WTC11 (cell line): ENCODE measurements at regions of chr20 and their contacts with region 1.

Region 1: DNA sequence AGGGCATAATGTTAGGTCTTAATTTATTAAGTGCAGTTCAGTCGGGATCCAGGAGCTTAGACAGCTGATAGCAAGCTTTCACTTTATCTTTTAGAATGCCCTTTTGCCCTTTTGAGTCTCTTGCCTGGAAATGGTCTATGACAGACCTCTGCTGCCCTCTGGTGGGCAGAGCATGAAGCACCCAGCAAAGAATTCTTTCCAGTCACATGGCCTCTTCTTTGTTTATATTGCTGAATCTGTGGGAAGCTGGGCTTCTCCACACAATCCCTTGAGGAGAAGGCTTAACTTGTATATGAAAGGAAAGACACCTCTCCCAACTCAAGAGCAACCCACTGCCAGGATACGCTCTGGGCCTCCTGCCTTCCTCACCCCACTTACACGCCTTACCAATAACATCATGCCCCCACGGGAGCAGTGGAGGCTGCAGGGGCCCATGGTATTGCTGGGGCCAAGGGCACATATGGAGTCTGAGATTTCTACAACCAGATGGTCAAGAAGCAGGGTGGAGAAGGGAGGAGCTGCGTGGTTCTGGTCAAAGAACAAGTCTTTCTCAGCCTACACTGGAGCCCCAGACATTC is 20.4 kb downstream of the WFDC3 start:
- DNase-seq: peak; percentile 87
- ATAC-seq: peak; percentile 79
- H3K4me3 Mint-ChIP-seq: no peak overlapping the region
- H3K27ac Mint-ChIP-seq: peak overlapping the region; percentile 73
- H3K4me1 Mint-ChIP-seq: peaks cover 29% of the 10 kb centered on the region
- H3K27me3 Mint-ChIP-seq: no peaks in the 10 kb centered on the region
- CTCF ChIP-seq: peak; percentile 95

Region 2: DNA sequence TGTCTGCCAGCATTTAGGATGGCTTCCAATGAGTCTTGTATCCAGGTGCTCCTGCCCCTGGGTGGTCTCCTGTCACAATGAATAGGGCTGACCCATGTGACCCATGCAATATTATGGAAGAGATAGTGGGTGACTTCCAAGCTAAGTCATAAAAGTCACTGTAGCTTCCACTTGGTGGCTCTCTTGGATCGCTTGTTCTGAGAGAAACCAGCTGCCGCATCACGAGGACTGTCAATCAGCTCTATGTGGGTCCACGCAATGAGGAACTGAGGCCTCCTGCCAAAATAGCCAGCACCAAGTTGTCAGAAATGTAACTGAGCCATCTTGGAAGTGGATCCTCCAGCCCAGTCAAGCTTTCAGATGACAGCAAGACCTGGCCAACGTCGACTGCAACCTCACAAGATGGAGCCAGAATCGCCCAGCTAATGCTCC is 448.3 kb before region 1 on chr20:
- CTCF ChIA-PET with region 1: interaction called, 12 read pairs
- POLR2A ChIA-PET with region 1: no interaction called
- DNase-seq: no peak
- ATAC-seq: peak; percentile 49
- H3K4me3 Mint-ChIP-seq: no peak overlapping the region
- H3K27ac Mint-ChIP-seq: no peak overlapping the region
- H3K4me1 Mint-ChIP-seq: peaks cover 2% of the 10 kb centered on the region; the same call in 1 of the 2 replicates
- H3K27me3 Mint-ChIP-seq: no peaks in the 10 kb centered on the region
- CTCF ChIP-seq: no peak

Region 3: GRCh38 chr20:45436732-45437391 is 334.4 kb before region 1 on chr20:
- CTCF ChIA-PET with region 1: interaction called, 33 read pairs
- POLR2A ChIA-PET with region 1: no interaction called
- DNase-seq: peak; percentile 90
- ATAC-seq: peak; percentile 97
- H3K4me3 Mint-ChIP-seq: peak overlapping the region; percentile 82
- H3K27ac Mint-ChIP-seq: no peak overlapping the region
- H3K4me1 Mint-ChIP-seq: peaks cover 16% of the 10 kb centered on the region
- H3K27me3 Mint-ChIP-seq: peaks cover 5% of the 10 kb centered on the region; the same call in 1 of the 2 replicates
- CTCF ChIP-seq: peak; percentile 92

Region 4: DNA sequence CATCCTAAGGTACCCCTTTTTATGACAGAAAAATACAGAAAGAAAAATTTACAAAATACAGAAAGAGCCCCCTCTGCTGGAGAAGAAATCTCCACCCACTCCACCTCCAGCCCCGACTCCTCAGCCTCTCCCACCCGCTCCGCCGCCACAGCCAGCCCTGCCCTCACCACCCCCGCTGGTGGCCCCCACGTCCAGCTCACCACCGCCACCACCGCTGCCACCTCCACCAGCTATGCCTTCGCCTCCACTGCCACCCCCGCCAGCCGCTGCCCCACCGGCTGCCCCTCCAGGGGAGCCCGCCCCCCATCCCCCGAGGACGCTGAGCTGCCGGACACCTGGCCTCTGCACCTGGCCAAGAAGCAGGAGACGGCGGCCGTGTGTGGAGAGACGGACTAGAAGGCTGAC is 284.0 kb before region 1 on chr20:
- CTCF ChIA-PET with region 1: interaction called, 41 read pairs
- POLR2A ChIA-PET with region 1: no interaction called
- DNase-seq: peak; percentile 58
- ATAC-seq: peak; percentile 82
- H3K4me3 Mint-ChIP-seq: peak overlapping the region; percentile 63
- H3K27ac Mint-ChIP-seq: no peak overlapping the region
- H3K4me1 Mint-ChIP-seq: peaks cover 34% of the 10 kb centered on the region
- H3K27me3 Mint-ChIP-seq: no peaks in the 10 kb centered on the region
- CTCF ChIP-seq: peak; percentile 55

Region 5: DNA sequence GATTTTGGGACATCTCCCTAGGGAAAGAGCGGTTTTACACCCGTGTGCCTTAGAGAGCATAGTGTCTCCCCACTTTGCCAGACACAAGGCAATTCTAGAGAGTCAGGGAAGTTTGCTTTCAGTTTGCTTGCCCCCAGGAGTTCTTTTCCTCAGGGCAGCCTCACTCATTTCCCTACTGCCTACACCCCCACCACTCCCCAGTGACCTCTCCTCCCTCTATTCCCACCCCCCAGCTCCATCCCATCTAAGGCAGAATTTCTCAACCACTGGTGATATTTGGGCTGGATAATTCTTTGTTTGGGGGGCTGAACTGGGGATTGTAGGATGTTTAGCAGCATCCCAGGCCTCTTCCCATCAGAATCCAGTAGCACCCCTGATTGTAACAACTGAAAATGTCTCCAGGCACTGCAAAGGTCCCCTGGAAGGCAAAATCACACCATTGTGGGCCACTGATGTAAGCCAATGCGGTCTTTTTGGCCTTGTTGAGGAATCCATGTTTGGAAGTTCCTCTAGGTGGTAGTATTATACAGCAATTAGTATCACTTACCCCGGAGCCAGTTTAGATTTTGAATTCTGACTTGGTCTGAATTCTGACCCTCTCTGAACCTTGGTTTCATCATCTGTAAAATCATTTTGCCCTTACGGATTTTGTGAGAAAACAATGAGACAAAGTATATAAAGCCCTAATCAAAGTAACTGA is 225.4 kb before region 1 on chr20:
- CTCF ChIA-PET with region 1: interaction called, 79 read pairs
- POLR2A ChIA-PET with region 1: interaction called, 3 read pairs
- DNase-seq: peak; percentile 14
- ATAC-seq: peak; percentile 93
- H3K4me3 Mint-ChIP-seq: no peak overlapping the region
- H3K27ac Mint-ChIP-seq: 0 out of 2 replicates have a peak overlapping the region, but pooled peaks have one; percentile 9
- H3K4me1 Mint-ChIP-seq: peaks cover 13% of the 10 kb centered on the region
- H3K27me3 Mint-ChIP-seq: no peaks in the 10 kb centered on the region
- CTCF ChIP-seq: no peak; the same call in 1 of the 2 replicates

Region 6: GRCh38 chr20:45629496-45630100 is 141.7 kb before region 1 on chr20 and contains the start of gene WFDC10A:
- CTCF ChIA-PET with region 1: interaction called, 79 read pairs
- POLR2A ChIA-PET with region 1: no interaction called
- DNase-seq: peak; percentile 61
- ATAC-seq: peak; percentile 100
- H3K4me3 Mint-ChIP-seq: no peak within 1 kb of the TSS
- H3K27ac Mint-ChIP-seq: no peak within 1 kb of the TSS
- H3K4me1 Mint-ChIP-seq: peaks cover 8% of the 10 kb centered on the region
- H3K27me3 Mint-ChIP-seq: peaks cover 4% of the 10 kb centered on the region; the same call in 1 of the 2 replicates
- CTCF ChIP-seq: peak; percentile 17; the same call in 1 of the 2 replicates
- total RNA-seq, gene WFDC10A: 0.37 TPM in 1 of 3 replicates, not detected in the others

Region 7: GRCh38 chr20:45823949-45824835 is 52.9 kb after region 1 on chr20:
- CTCF ChIA-PET with region 1: interaction called, 13 read pairs
- POLR2A ChIA-PET with region 1: interaction called, 3 read pairs
- DNase-seq: peak; percentile 81
- ATAC-seq: peak; percentile 86
- H3K4me3 Mint-ChIP-seq: peak overlapping the region; percentile 61
- H3K27ac Mint-ChIP-seq: 0 out of 2 replicates have a peak overlapping the region, but pooled peaks have one; percentile 48
- H3K4me1 Mint-ChIP-seq: peaks cover 26% of the 10 kb centered on the region
- H3K27me3 Mint-ChIP-seq: peaks cover 23% of the 10 kb centered on the region
- CTCF ChIP-seq: no peak